Activated CD4-positive, alpha-beta memory T cell treated with anti-CD3 and anti-CD28 coated beads for 36 hours (primary cell): ENCODE measurements at regions of chr16 and their contacts with region 1.

Region 1: GRCh38 chr16:31382485-31383161 is 10.5 kb upstream of the ITGAD start:
- DNase-seq: peak; percentile 80
- H3K4me3 Mint-ChIP-seq: no peak overlapping the region
- H3K27ac Mint-ChIP-seq: no peak overlapping the region
- H3K4me1 Mint-ChIP-seq: peaks cover 22% of the 10 kb centered on the region
- H3K27me3 Mint-ChIP-seq: peaks cover 18% of the 10 kb centered on the region

Region 2: GRCh38 chr16:30669896-30670797 is 712.5 kb before region 1 on chr16:
- CTCF ChIA-PET with region 1: no interaction called
- POLR2A ChIA-PET with region 1: no interaction called
- intact Hi-C with region 1: no loop called
- DNase-seq: no peak
- H3K4me3 Mint-ChIP-seq: no peak overlapping the region
- H3K27ac Mint-ChIP-seq: no peak overlapping the region
- H3K4me1 Mint-ChIP-seq: no peaks in the 10 kb centered on the region
- H3K27me3 Mint-ChIP-seq: no peaks in the 10 kb centered on the region

Region 3: DNA sequence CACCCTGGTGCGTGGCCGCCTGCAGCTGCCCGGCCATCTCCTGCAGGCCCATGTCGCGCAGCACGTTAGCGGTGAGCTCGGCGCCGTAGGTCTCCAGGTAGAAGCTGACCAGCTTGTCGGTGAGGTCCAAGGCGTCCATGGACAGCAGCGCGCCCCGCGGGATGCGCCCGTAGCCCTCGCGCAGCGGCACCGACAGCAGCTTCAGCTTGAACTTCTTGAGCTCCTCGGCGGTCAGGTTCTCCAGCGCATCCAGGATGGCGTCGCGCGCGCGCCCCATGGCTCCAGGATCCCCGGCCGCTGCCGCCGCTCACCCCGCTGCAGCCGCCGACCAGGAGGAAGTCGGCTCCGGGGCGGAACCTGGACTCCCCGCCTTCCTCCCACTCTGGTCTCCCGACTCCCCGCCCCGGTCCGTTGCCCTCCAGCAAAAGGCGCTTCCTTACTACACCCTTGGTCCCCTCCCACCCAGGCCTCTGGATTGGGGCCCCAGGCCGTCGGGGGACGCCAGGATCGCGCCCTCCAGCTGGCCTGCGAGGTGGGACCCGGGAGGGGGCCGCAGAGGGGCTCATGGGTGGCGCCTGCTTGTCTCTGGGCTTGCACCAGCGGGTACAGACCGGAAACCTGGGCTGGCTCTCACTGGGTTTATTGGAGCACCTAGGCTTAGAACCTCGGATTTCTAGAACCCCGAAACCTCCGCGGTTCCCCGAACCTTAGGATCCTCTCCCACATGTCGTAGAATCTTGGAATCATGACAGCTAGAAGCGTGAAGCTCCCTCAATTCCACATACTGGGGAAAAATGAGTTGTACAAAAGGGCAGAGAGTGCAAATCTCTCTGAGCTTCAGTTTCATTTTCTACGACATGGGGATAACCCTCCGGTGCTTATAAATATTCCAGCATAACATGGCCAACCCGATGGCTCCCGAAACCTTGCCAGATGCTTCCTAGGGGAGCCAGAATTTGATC is 179.9 kb before region 1 on chr16 and contains the start of gene PYCARD:
- CTCF ChIA-PET with region 1: interaction called, 28 read pairs
- POLR2A ChIA-PET with region 1: interaction called, 3 read pairs
- intact Hi-C with region 1: loop called (anchors 1 kb)
- DNase-seq: peak; percentile 49
- H3K4me3 Mint-ChIP-seq: peak within 1 kb of the TSS; percentile 78
- H3K27ac Mint-ChIP-seq: peak within 1 kb of the TSS; percentile 69
- H3K4me1 Mint-ChIP-seq: peaks cover 54% of the 10 kb centered on the region
- H3K27me3 Mint-ChIP-seq: no peaks in the 10 kb centered on the region
- total RNA-seq, gene PYCARD: 13.6 to 14.6 TPM

Region 4: GRCh38 chr16:31333686-31334649 is 48.7 kb before region 1 on chr16:
- CTCF ChIA-PET with region 1: no interaction called
- POLR2A ChIA-PET with region 1: no interaction called
- intact Hi-C with region 1: loop called (anchors 10 kb)
- DNase-seq: peak; percentile 40
- H3K4me3 Mint-ChIP-seq: no peak overlapping the region
- H3K27ac Mint-ChIP-seq: no peak overlapping the region
- H3K4me1 Mint-ChIP-seq: peaks cover 12% of the 10 kb centered on the region
- H3K27me3 Mint-ChIP-seq: peaks cover 33% of the 10 kb centered on the region

Region 5: DNA sequence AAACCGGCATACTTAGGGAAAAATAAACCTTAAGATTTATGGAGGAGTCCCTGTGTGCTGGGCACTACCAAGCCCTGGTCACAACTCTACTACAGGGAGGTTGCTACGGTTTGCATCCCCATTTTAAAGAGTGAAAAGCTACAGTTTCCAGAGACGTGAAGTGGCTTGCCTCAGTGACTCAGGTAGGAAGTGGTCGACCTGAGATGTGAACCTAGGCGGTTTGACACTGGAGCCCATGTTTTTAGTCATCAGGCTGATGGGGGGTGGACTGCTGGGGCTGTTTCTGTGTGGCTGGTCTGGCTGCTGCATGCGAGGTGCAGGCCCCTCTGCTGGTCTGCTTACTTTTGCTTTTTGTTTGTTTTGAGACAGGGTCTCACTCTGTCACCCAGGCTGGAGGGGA is 39.0 kb after region 1 on chr16:
- CTCF ChIA-PET with region 1: interaction called, 5 read pairs
- POLR2A ChIA-PET with region 1: no interaction called
- intact Hi-C with region 1: loop called (anchors 1 kb)
- DNase-seq: peak; percentile 87
- H3K4me3 Mint-ChIP-seq: no peak overlapping the region
- H3K27ac Mint-ChIP-seq: no peak overlapping the region
- H3K4me1 Mint-ChIP-seq: peaks cover 25% of the 10 kb centered on the region
- H3K27me3 Mint-ChIP-seq: peaks cover 11% of the 10 kb centered on the region

Region 6: DNA sequence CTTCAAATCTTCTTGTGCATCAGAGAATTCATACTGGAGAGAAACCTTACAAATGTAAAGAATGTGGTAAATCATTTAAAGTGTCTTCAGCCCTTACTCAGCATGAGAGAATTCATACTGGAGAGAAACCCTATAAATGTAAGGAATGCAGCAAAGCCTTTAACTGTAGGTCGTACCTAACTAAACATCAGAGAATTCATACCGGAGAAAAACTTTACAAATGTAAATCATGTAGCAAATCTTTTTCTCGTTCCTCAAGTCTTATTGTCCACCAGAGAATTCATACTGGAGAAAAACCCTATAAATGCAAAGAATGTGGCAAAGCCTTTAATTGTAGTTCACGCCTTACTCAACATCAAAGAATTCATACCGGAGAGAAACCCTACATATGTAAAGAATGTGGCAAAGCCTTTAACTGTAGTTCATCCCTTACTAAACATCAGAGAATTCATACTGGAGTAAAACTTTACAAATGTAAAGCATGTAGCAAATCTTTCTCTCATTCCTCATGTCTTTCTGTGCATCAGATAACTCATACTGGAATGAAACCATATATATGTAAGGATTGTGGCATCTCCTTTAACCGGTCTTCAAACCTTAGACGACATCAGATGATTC is 372.5 kb after region 1 on chr16:
- CTCF ChIA-PET with region 1: no interaction called
- POLR2A ChIA-PET with region 1: no interaction called
- intact Hi-C with region 1: no loop called
- DNase-seq: no peak
- H3K4me3 Mint-ChIP-seq: no peak overlapping the region
- H3K27ac Mint-ChIP-seq: no peak overlapping the region
- H3K4me1 Mint-ChIP-seq: no peaks in the 10 kb centered on the region
- H3K27me3 Mint-ChIP-seq: no peaks in the 10 kb centered on the region